AG04449 (cell line): ENCODE measurements at regions of chr1 and their contacts with region 1.

Region 1: GRCh38 chr1:150010393-150011115 is at the start of gene OTUD7B:
- DNase-seq: no peak
- H3K4me3 ChIP-seq: peak within 1 kb of the TSS; percentile 87
- CTCF ChIP-seq: peak; percentile 18

Region 2: DNA sequence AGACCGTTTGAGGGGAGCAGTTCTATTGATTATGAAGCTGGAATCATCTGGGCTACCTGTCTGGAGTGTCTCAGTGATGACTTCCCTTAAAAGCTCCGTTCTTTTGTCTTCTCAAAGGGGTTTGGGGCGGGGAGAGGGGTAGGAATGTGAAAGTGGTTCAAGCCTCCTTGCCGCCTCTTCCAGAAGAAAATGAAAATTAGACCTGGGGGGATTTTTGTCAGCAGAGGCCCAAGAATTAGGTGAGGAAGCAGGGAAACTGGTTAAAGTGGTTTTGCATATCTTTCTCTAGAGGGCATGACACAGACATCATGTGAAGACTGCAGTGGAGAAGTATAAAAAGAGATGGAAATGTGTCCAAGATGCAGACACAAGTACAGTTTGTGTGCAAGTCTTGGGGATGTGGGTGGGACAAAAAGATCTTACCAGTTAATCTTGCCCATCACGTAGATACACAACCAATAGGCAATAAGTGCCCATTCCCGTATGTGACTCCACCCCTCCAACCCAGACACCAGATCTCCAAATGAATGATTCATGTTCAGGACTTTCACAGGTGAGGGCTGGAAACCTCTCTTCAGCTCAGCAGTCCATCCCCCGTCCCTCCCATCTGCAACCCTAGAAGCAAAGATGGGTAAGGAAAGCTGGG is 73.4 kb before region 1 on chr1:
- CTCF ChIA-PET with region 1: no interaction called
- POLR2A ChIA-PET with region 1: no interaction called
- DNase-seq: no peak
- H3K4me3 ChIP-seq: peak overlapping the region; percentile 85
- CTCF ChIP-seq: peak; percentile 7

Region 3: DNA sequence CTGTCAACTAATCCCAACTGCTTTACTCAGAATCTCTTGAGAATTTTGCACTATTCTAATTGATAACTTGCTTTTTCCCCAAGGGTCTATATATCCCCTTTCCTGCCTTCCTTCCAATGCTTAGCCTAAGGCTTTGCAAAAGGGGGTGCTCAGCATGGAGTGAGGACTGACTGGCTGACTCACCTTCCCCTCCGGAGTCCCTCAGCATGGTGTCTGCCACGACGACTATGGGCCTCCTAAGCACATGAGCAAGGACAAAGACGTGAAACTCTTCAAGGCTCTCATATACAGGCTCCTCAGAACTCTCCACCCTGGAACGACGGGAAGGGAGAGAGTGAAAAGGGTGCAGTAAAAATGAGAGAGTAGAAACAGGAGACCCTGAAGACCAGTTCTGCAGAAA is 60.6 kb before region 1 on chr1:
- CTCF ChIA-PET with region 1: no interaction called
- POLR2A ChIA-PET with region 1: no interaction called
- DNase-seq: no peak
- H3K4me3 ChIP-seq: no peak overlapping the region
- CTCF ChIP-seq: no peak

Region 4: GRCh38 chr1:150053926-150054325 is 43.4 kb after region 1 on chr1:
- CTCF ChIA-PET with region 1: interaction called, 12 read pairs
- POLR2A ChIA-PET with region 1: no interaction called
- DNase-seq: no peak
- H3K4me3 ChIP-seq: no peak overlapping the region
- CTCF ChIP-seq: no peak